CD4-positive, alpha-beta memory T cell (primary cell): ENCODE measurements at regions of chr3 and their contacts with region 1.

Region 1: DNA sequence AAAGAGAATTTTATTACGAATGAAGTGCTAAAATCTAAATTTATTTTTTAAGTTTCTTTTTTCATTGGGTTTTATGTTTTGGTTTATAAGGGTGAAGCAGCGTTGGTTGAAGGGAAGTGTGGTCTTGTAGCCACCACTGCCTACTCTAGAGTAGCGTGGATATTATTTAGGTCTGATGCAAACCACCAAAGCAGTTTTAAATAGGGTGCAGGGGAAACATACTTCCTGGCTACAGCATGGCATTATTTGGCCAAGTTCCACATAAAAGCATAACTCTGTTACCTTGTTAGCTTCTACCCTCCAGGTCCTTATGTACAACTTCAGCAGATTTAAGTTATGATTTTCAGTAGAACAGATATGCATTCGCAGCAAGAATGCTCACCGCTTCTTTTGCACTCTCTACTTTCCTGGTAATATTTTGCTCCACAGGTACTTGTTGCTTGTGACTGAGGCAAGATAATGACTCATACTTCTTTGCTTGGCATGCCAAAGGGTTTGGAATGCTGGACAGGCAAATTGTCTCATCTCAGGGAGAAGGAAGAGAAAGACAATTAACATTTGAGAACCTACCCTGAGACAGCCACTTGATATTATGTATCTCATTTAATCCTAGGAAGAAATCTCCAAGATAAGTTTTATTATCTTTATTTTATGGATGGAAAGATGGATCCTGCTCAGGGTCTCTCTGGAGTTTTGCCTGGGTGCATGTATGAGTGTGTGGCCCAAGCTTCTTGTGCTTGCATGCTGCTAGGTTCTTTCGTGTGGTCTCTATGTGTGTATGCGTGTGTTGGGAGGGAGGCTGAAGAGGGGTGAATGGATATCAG is 5.4 kb downstream of the TGFBR2 start:
- DNase-seq: peak in 4 of 5 donors; percentile 47 to 57 (median 50)
- H3K4me3 ChIP-seq: peak overlapping the region in 1 of 2 donors; percentile 14
- H3K4me3 Mint-ChIP-seq: peak overlapping the region; percentile 90 to 99 (median 98)
- H3K27ac ChIP-seq: peak overlapping the region; percentile 72
- H3K27ac Mint-ChIP-seq: peak overlapping the region; percentile 88 to 96 (median 93)
- H3K4me1 ChIP-seq: peaks cover 75% of the 10 kb centered on the region
- H3K4me1 Mint-ChIP-seq: peaks cover 66 to 84% (median 70%) of the 10 kb centered on the region in 4 donors
- H3K27me3 ChIP-seq: no peaks in the 10 kb centered on the region
- H3K27me3 Mint-ChIP-seq: no peaks in the 10 kb centered on the region

Region 2: DNA sequence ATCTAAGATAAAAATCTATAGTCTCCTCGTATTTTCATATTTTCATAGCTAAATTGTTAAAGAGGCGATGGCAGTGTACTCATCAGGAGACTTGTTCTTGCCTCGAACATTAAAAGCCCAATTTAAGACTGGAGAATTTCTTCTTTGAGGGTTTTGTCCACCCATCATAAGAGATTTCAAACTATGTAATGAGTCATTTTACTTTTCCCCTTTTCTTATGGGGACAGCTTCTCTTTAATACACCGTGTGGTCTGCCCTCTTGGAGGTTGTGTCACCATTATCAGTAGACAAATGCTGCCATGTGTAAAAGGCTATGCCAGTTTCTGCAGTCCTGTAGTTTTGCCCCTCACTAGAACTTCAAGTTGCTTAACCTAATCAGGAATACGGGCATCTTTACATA is 11.5 kb after region 1 on chr3:
- CTCF ChIA-PET with region 1: interaction called, 75 read pairs
- POLR2A ChIA-PET with region 1: interaction called, 290 read pairs
- intact Hi-C with region 1: no loop called
- DNase-seq: peak in 1 of 5 donors; percentile 41
- H3K4me3 ChIP-seq: no peak overlapping the region
- H3K4me3 Mint-ChIP-seq: peak overlapping the region; percentile 6 to 86 (median 69)
- H3K27ac ChIP-seq: peak overlapping the region; percentile 40
- H3K27ac Mint-ChIP-seq: peak overlapping the region; percentile 38 to 92 (median 90)
- H3K4me1 ChIP-seq: peaks cover 99% of the 10 kb centered on the region
- H3K4me1 Mint-ChIP-seq: peaks cover 70 to 98% (median 83%) of the 10 kb centered on the region in 4 donors
- H3K27me3 ChIP-seq: no peaks in the 10 kb centered on the region
- H3K27me3 Mint-ChIP-seq: no peaks in the 10 kb centered on the region

Region 3: DNA sequence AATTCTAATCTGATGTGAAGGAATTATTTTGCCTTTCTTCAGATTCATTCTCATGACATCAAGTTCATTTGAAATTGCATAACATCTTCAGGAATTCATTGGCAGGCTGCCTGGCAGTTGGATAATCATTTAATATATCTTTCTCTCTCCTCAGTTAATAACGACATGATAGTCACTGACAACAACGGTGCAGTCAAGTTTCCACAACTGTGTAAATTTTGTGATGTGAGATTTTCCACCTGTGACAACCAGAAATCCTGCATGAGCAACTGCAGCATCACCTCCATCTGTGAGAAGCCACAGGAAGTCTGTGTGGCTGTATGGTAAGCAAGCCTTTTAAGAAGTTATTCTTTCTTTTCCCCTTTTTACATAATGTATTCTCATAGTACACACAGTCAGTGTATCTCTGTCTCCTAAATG is 32.8 kb after region 1 on chr3:
- CTCF ChIA-PET with region 1: interaction called, 8 read pairs
- POLR2A ChIA-PET with region 1: interaction called, 51 read pairs
- intact Hi-C with region 1: loop called (anchors 1 kb)
- DNase-seq: peak; percentile 61 to 87 (median 66)
- H3K4me3 ChIP-seq: peak overlapping the region in 1 of 2 donors; percentile 37
- H3K4me3 Mint-ChIP-seq: peak overlapping the region; percentile 71 to 86 (median 78)
- H3K27ac ChIP-seq: peak overlapping the region; percentile 66
- H3K27ac Mint-ChIP-seq: peak overlapping the region; percentile 88 to 97 (median 93)
- H3K4me1 ChIP-seq: peaks cover 99% of the 10 kb centered on the region
- H3K4me1 Mint-ChIP-seq: peaks cover 77 to 97% (median 87%) of the 10 kb centered on the region in 4 donors
- H3K27me3 ChIP-seq: no peaks in the 10 kb centered on the region
- H3K27me3 Mint-ChIP-seq: no peaks in the 10 kb centered on the region

Region 4: GRCh38 chr3:31132132-31132769 is 520.4 kb after region 1 on chr3:
- CTCF ChIA-PET with region 1: no interaction called
- POLR2A ChIA-PET with region 1: no interaction called
- intact Hi-C with region 1: no loop called
- DNase-seq: peak in 4 of 5 donors; percentile 37 to 47 (median 44)
- H3K4me3 ChIP-seq: no peak overlapping the region
- H3K4me3 Mint-ChIP-seq: no peak overlapping the region
- H3K27ac ChIP-seq: no peak overlapping the region
- H3K27ac Mint-ChIP-seq: no peak overlapping the region
- H3K4me1 ChIP-seq: no peaks in the 10 kb centered on the region
- H3K4me1 Mint-ChIP-seq: peaks cover 0 to 6% (median 1%) of the 10 kb centered on the region in 4 donors
- H3K27me3 ChIP-seq: no peaks in the 10 kb centered on the region
- H3K27me3 Mint-ChIP-seq: no peaks in the 10 kb centered on the region